GM10248 (cell line): ENCODE measurements at regions of chr1 and their contacts with region 1.

Region 1: GRCh38 chr1:87953732-87954344 is 625.2 kb downstream of the LMO4 start:
- DNase-seq: peak; percentile 32
- CTCF ChIP-seq: peak; percentile 73

Region 2: DNA sequence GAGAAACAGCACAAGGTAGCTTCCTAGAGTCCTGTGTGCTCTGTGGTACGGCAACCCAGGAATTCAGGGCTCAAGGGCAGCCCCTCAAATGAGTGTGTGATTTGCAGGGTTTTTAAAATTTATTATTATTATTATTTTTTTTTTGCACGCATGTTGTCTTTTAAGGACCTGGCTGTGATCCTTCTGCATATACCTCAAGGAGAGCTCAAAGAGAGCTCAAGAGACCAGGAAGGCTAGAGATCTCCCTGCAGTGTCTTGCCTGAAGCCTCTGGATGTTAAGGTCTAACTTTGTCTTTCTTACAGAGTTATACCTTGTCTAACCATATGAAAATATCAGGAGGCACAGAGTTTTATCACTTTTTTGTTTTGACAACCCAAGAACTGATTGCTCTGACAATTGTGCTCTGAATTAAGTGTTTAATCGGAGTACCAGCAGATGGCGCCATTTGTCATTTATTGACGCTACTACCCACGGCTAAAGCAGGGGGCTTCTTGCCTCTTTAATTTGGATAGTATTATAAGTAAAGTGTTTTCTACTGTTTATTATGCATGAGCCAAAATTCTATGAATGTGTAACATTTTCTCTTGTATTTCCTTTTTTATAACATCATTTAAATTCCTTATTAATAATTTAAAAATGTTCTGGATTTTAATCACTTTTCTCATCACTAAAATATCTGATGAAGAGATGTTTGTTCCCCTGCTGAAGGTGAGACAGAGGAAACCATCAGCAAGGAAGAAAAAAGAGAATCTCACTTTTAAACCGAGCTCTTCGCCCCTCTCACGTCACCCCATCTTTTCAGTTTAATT is 660.9 kb before region 1 on chr1:
- CTCF ChIA-PET with region 1: interaction called, 72 read pairs
- POLR2A ChIA-PET with region 1: no interaction called
- DNase-seq: peak; percentile 48
- CTCF ChIP-seq: peak; percentile 66

Region 3: DNA sequence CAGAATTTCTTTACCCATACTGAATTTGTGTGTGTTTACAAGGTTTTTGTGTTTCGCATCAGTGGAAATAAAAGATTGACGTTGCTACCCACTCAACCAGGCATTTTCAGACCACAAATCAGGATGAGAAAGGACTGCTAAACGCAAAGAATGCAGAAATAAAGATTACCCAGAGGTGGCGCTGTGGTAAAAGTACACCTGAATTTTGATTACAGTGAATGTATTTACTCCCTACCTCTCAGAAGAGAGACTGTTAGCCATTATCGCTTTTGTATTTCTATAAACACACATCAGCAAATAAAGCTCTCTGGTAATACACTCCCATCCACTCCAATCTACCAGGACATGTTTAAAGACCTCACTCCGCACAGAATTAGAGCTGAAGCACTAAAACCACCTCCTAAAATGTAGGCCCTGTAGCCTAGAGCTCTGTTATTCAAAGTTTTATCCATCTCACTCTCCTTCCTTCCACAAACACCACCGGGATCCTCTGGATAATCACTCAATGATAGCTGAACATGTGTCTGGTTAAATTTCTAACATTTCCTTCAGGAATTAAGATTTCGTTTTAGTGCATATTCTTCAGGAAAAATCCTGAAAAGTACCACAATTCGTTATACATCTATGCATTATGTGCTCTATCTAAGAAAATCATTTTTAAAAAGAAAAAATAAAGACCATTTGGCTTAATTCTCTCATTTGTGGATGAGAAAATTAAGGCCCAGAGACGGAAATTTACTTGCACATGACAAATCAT is 627.7 kb before region 1 on chr1:
- CTCF ChIA-PET with region 1: interaction called, 42 read pairs
- POLR2A ChIA-PET with region 1: no interaction called
- DNase-seq: peak; percentile 41
- CTCF ChIP-seq: peak; percentile 77

Region 4: GRCh38 chr1:87930796-87931195 is 23.0 kb before region 1 on chr1:
- CTCF ChIA-PET with region 1: interaction called, 13 read pairs
- POLR2A ChIA-PET with region 1: no interaction called
- DNase-seq: no peak
- CTCF ChIP-seq: no peak

Region 5: GRCh38 chr1:87968197-87968955 is 14.5 kb after region 1 on chr1:
- CTCF ChIA-PET with region 1: interaction called, 37 read pairs
- POLR2A ChIA-PET with region 1: no interaction called
- DNase-seq: no peak
- CTCF ChIP-seq: no peak